ENCODE measurements at regions of chr16 and their contacts with region 1.

Region 1: GRCh38 chr16:26598061-26598460 is 468.7 kb upstream of the C16orf82 start:
- DNase-seq: peak; percentile 94
- H3K4me3 Mint-ChIP-seq: peak overlapping the region; percentile 66
- H3K27ac Mint-ChIP-seq: peak overlapping the region; percentile 96
- H3K4me1 Mint-ChIP-seq: peaks cover 67% of the 10 kb centered on the region
- H3K27me3 Mint-ChIP-seq: no peaks in the 10 kb centered on the region

Region 2: DNA sequence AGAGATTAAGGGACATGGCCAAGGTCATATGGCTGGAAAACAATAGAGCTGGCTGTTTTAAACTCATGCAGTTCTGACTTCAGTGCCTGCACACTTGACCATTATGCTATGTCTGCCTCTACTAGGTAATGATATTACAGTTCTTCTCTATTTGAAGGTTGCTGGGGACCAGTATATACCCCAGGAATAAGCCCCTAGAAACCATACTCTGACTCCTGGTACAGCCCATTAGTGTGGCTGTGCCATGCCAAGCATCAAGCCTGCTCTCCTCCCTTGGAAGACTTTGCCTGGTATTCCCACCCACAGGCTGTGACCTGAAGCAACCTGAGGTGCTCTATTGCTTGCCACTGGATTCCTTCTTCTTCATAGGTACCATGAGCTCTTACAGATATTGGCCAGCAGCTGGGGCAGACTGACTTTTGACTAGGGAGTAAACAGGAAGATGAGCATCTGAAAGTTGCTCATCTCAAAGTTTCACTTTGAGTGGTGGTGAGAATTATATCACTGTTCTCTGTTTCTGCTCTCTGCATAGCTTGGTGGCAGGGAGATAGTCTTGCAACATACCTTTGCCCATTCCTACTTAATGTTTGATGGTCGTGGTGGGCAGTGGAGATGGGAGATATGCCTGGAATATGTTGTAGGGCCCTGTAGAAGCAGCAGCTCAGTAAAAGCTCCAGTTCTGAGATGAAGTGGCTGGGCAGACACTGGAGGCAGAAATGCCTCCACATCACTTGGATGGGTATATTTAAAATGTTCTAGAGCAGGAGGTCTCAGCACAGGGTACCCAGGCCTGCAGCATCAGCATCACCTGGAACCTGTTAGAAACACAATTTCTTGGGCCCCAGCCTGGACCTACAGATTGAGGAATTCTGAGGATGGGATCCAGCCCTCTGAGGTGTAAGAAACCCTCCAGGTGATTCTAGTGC is 631.6 kb before region 1 on chr16:
- intact Hi-C with region 1: loop called (anchors 5 kb)
- DNase-seq: peak; percentile 79
- H3K4me3 Mint-ChIP-seq: peak overlapping the region; percentile 57
- H3K27ac Mint-ChIP-seq: peak overlapping the region; percentile 83
- H3K4me1 Mint-ChIP-seq: peaks cover 35% of the 10 kb centered on the region
- H3K27me3 Mint-ChIP-seq: no peaks in the 10 kb centered on the region

Region 3: GRCh38 chr16:26645614-26646013 is 47.6 kb after region 1 on chr16:
- intact Hi-C with region 1: loop called (anchors 10 kb)
- DNase-seq: peak; percentile 90
- H3K4me3 Mint-ChIP-seq: peak overlapping the region; percentile 42
- H3K27ac Mint-ChIP-seq: peak overlapping the region; percentile 55
- H3K4me1 Mint-ChIP-seq: peaks cover 50% of the 10 kb centered on the region
- H3K27me3 Mint-ChIP-seq: no peaks in the 10 kb centered on the region

Region 4: GRCh38 chr16:26765087-26765486 is 167.0 kb after region 1 on chr16:
- intact Hi-C with region 1: loop called (anchors 5 kb)
- DNase-seq: peak; percentile 58
- H3K4me3 Mint-ChIP-seq: no peak overlapping the region
- H3K27ac Mint-ChIP-seq: no peak overlapping the region
- H3K4me1 Mint-ChIP-seq: peaks cover 10% of the 10 kb centered on the region
- H3K27me3 Mint-ChIP-seq: peaks cover 8% of the 10 kb centered on the region

Region 5: DNA sequence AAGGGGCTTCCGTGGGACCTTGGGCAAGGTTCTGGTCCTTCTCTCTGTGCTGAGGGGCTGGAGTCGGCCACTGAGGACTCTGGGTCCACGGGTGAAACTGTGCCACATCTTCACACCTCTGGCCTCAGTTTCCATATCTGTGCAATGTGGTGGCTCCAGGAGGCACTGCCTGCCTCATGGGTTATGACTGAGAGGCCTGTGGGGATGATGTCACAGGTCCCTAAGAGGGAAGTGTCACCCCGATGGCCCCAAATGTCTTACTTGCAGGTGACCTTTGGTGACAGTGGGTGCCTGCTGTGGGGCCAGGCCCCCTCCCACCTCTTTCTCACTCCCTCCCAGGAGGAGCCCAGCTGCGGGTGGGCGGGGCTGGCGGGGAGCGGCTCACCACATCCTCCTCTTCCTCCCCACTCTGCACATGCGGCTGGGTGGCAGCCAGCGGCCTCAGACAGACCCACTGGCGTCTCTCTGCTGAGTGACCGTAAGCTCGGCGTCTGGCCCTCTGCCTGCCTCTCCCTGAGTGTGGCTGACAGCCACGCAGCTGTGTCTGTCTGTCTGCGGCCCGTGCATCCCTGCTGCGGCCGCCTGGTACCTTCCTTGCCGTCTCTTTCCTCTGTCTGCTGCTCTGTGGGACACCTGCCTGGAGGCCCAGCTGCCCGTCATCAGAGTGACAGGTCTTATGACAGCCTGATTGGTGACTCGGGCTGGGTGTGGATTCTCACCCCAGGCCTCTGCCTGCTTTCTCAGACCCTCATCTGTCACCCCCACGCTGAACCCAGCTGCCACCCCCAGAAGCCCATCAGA is 803.9 kb after region 1 on chr16 and contains the start of gene IL21R:
- intact Hi-C with region 1: loop called (anchors 1 kb)
- DNase-seq: peak; percentile 94
- H3K4me3 Mint-ChIP-seq: peak within 1 kb of the TSS; percentile 100
- H3K27ac Mint-ChIP-seq: peak within 1 kb of the TSS; percentile 97
- H3K4me1 Mint-ChIP-seq: peaks cover 47% of the 10 kb centered on the region
- H3K27me3 Mint-ChIP-seq: no peaks in the 10 kb centered on the region
- total RNA-seq, gene IL21R: 94.9 and 100 TPM in 2 replicates